ENCODE measurements at regions of chr14 and their contacts with region 1.

Region 1: DNA sequence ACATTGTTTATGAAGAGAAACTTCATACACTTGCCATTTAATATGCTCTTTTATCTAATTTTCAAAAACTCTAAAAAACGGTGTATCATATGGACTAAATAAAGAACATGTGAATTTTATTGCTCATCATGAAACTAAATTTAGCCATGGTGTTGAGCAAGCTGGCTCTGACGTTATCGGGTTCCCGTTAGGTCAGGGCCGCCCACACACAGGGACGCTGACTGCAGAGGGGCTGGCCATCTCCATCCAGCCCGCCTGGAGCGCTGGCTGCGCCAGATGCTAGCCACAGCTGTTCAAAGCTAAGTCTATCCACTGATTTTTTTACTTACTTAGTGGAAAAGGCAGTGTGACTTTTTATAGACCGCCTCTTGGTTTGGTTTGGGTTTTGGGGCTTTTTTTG is 36.5 kb upstream of the DYNC1H1 start:
- DNase-seq: peak; percentile 53 to 95
- H3K4me3 ChIP-seq: peak overlapping the region in 1 of 2 donors; percentile 25
- H3K27ac ChIP-seq: peak overlapping the region; percentile 67 to 71
- H3K4me1 ChIP-seq: peaks cover 0 to 9% of the 10 kb centered on the region in 2 donors
- H3K27me3 ChIP-seq: no peaks in the 10 kb centered on the region
- CTCF ChIP-seq: no peak

Region 2: DNA sequence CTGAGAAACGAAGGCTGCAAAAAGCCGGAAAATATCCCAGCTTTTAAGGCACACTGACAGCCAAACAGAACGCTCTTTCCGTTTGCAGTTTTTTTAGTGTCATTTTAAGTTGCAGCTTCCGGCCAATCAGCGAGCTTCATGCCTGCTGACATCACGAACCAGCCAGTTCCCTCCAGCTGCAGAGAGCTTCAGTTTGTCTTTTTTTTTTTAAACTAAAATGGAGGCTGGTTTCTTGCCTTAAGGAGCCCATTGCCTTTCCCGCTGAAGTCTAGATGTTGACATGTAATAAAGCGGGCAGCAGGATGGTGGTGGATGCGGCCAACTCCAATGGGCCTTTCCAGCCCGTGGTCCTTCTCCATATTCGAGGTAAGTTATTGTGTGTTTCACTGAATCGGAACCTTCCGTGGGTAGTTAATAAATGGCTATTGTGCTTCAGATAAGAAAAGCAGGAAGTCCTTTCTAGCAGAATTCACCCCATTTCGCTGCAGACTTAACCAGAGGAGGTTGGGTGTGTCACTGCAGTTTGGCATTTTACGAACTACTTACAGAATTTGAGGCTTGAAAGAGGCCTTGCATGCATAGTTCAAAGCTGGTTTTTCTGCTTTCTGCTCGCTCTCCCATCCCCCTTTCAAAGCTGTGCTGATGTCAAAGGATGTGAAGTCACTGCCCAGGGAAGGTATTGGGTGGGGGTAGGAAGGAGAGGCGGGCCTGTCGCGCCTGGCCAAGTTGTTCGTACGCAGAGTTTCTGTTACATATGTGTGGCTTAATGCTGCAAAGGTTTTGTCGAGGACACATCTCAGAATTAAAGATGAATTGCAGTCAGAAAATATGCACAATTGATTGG is 118.0 kb before region 1 on chr14:
- intact Hi-C with region 1: loop called (anchors 2 kb)
- DNase-seq: peak; percentile 72 to 94
- H3K4me3 ChIP-seq: peak overlapping the region; percentile 73 to 90
- H3K27ac ChIP-seq: peak overlapping the region; percentile 97 to 98
- H3K4me1 ChIP-seq: peaks cover 6 to 27% of the 10 kb centered on the region in 2 donors
- H3K27me3 ChIP-seq: no peaks in the 10 kb centered on the region
- CTCF ChIP-seq: no peak

Region 3: DNA sequence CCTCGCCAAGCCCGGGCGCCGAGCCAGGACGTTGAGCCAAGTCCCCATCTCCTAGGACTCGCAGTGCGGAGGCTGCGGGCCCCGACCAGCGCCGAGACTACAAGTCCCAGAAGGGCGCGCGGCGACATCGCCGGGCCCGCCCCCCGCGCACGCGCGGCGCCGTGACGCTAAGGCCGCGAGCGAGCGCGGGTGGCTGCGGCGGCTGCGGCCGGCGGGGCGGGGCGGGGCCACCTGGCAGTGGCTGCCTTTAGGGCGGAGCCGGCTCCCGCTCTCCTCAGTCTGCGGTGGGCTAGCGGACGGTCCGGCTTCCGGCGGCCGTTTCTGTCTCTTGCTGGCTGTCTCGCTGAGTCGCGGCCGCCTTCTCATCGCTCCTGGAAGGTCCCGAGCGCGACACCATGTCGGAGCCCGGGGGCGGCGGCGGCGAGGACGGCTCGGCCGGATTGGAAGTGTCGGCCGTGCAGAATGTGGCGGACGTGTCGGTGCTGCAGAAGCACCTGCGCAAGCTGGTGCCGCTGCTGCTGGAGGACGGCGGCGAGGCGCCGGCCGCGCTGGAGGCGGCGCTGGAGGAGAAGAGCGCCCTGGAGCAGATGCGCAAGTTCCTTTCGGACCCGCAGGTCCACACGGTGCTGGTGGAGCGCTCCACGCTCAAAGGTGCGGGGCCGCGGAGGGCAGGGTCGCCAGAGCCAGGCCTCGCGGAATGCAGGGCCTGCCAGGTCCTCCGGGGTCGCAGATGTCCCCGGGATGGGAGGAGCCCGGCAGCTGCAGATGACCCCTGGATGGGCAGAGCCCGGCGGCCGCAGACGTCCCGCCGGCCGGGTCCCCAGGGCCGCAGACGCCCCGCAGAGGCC is 36.7 kb after region 1 on chr14 and contains the start of gene DYNC1H1:
- intact Hi-C with region 1: no loop called
- DNase-seq: peak; percentile 77 to 96
- H3K4me3 ChIP-seq: peak within 1 kb of the TSS; percentile 100
- H3K27ac ChIP-seq: peak within 1 kb of the TSS; percentile 93 to 95
- H3K4me1 ChIP-seq: peaks cover 2 to 6% of the 10 kb centered on the region in 2 donors
- H3K27me3 ChIP-seq: no peaks in the 10 kb centered on the region
- CTCF ChIP-seq: no peak
- total RNA-seq, gene DYNC1H1: 577 TPM